Mammary epithelial cell (primary cell): ENCODE measurements at regions of chr19 and their contacts with region 1.

Region 1: DNA sequence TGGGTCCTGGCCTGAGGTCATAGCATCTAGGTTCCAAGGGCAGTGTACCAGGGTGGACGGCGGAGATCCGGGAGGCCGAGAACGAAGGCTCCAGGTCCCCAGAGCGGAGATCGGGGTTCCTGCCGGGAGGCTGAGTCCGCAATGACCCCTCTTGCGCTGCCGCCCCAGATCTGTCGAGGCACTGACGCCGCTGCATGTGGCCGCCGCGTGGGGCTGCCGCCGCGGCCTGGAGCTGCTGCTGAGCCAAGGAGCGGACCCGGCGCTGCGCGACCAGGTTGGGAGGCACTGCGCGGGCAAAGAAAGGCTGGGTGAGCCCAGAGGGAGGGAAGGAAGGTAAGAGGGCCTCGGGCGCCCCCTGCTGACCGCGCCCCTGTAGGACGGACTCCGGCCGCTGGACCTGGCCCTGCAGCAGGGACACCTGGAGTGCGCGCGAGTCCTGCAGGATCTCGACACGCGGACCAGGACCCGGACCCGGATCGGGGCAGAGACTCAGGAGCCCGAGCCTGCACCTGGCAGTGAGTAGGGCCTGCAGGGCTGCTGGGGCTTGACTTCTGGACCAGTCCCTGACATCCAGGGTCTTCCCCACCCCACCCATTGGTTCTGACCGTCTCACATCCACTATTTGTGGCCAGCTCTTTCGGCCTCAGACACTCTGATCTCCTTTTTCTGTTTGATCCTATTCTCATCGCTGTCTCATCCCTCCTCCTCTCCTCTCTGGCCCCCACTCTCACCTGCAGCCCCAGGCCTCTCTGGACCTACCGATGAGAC is 971 bp downstream of the ANKLE1 start:
- DNase-seq: peak; percentile 72
- H3K4me3 ChIP-seq: peak overlapping the region in 2 of 3 experiments; percentile 10 to 41
- H3K27ac ChIP-seq: no peak overlapping the region
- H3K4me1 ChIP-seq: peaks cover 12% of the 10 kb centered on the region
- H3K27me3 ChIP-seq: no peaks in the 10 kb centered on the region
- CTCF ChIP-seq: peak; percentile 68 to 90

Region 2: GRCh38 chr19:16771618-16772017 is 511.1 kb before region 1 on chr19:
- CTCF ChIA-PET with region 1: no interaction called
- dilution Hi-C with region 1: no loop called
- in situ Hi-C with region 1: no loop called
- intact Hi-C with region 1: loop called (anchors 5 kb)
- DNase-seq: peak; percentile 55
- H3K4me3 ChIP-seq: no peak overlapping the region
- H3K27ac ChIP-seq: no peak overlapping the region
- H3K4me1 ChIP-seq: peaks cover 3% of the 10 kb centered on the region
- H3K27me3 ChIP-seq: no peaks in the 10 kb centered on the region
- CTCF ChIP-seq: peak; percentile 81 to 86

Region 3: DNA sequence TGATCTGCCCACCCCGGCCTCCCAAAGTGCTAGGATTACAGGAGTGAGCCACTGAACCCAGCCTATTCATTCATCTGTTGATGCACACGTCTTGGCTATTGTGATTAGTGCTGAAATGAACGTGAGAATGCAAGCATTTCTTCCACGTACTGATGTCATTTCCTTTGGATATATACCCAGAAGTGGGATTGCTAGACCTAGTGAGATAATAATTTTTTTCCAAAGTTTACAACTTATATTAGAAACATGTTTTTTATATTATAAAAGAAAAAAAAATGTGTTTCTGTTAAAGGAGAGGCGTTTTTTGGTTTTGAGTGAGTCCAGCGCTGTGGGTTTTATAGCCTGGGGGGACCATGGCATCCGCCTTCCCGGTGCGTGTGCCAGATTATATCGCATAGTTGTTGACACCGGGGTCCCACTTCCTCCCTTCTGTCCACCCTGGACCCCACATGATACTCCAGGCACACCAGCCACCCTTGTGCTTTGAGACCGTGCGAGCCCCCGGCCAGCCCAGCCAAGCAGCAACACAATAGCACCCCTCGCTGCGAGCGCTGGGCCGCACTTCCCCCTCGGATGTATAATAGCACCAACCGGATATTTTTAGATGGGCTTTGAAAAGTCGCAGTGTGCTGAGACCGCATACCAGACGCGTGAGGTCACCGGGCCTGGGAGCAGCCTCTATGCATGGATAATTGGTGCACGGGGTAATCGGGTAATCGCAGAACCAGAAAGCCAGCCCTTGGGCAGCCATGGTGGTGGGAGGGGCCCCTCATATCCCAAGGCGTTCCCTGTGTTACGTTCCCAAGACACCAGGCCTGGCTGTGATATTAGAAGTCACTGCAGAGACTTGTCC is 147.4 kb before region 1 on chr19:
- CTCF ChIA-PET with region 1: no interaction called
- dilution Hi-C with region 1: no loop called
- in situ Hi-C with region 1: no loop called
- intact Hi-C with region 1: no loop called
- DNase-seq: peak; percentile 85
- H3K4me3 ChIP-seq: peak overlapping the region in 2 of 3 experiments; percentile 28 to 35
- H3K27ac ChIP-seq: peak overlapping the region; percentile 79
- H3K4me1 ChIP-seq: peaks cover 18% of the 10 kb centered on the region
- H3K27me3 ChIP-seq: no peaks in the 10 kb centered on the region
- CTCF ChIP-seq: no peak

Region 4: GRCh38 chr19:17205237-17206140 is 77.2 kb before region 1 on chr19:
- CTCF ChIA-PET with region 1: no interaction called
- dilution Hi-C with region 1: no loop called
- in situ Hi-C with region 1: loop called (anchors 10 kb)
- intact Hi-C with region 1: loop called (anchors 1 kb)
- DNase-seq: peak; percentile 23
- H3K4me3 ChIP-seq: no peak overlapping the region
- H3K27ac ChIP-seq: no peak overlapping the region
- H3K4me1 ChIP-seq: peaks cover 4% of the 10 kb centered on the region
- H3K27me3 ChIP-seq: no peaks in the 10 kb centered on the region
- CTCF ChIP-seq: peak; percentile 60 to 73

Region 5: DNA sequence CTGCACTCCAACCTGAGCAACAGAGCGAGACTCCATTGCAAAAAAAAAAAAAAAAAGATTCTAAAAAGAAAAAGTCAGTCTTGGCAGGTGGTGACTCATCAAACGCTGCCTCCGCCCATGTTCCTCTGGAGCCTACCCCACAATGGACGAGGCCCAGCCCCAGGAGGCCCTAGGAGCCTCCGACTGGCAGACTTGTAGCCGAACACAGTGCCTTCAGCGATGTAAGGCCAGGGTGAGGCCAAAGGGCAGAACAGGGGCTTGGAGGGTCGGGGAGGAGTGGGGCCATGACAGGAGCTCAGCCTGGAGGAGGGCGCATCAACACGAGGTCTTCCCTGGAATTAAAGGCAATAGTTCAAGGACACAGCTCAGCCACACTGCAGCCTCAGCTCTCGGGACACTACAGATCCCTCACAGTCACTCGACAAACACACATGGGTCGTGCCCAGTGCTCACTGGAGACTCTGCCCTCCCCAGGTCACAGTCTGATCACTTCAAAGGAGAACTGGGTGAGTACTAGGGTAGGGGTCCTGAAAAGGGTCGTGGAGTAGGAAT is 62.4 kb before region 1 on chr19:
- CTCF ChIA-PET with region 1: no interaction called
- dilution Hi-C with region 1: no loop called
- in situ Hi-C with region 1: no loop called
- intact Hi-C with region 1: no loop called
- DNase-seq: no peak
- H3K4me3 ChIP-seq: no peak overlapping the region
- H3K27ac ChIP-seq: no peak overlapping the region
- H3K4me1 ChIP-seq: peaks cover 7% of the 10 kb centered on the region
- H3K27me3 ChIP-seq: no peaks in the 10 kb centered on the region
- CTCF ChIP-seq: no peak

Region 6: DNA sequence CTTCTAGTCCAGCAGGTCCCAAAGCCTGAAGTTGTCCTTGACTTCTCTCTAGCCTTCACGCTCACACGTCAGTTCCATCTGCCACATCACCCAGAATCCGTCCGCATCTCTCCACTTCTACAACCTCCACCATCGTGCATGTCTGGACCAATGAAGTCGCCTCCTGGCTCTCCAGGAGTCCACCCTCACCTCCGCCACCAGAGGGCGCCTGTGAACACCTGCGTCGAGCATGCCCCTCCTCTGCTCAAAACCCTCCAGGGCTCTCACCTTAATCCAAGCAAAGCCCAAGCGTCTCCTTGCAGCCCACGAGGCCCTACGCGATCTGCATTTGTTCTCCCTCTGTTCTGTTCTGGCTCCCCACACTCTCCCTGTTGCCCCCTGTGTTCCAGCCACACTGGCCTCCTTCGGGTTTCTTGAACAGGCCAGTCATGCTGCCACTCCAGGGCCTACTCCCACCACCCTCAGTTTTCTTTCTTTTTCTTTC is 21.8 kb before region 1 on chr19:
- CTCF ChIA-PET with region 1: interaction called, 5 read pairs
- dilution Hi-C with region 1: no loop called
- in situ Hi-C with region 1: no loop called
- intact Hi-C with region 1: loop called (anchors 1 kb)
- DNase-seq: peak; percentile 66
- H3K4me3 ChIP-seq: no peak overlapping the region
- H3K27ac ChIP-seq: no peak overlapping the region
- H3K4me1 ChIP-seq: no peaks in the 10 kb centered on the region
- H3K27me3 ChIP-seq: no peaks in the 10 kb centered on the region
- CTCF ChIP-seq: peak; percentile 93 to 98